Naive thymus-derived CD4-positive, alpha-beta T cell (primary cell): ENCODE measurements at regions of chr2 and their contacts with region 1.

Region 1: DNA sequence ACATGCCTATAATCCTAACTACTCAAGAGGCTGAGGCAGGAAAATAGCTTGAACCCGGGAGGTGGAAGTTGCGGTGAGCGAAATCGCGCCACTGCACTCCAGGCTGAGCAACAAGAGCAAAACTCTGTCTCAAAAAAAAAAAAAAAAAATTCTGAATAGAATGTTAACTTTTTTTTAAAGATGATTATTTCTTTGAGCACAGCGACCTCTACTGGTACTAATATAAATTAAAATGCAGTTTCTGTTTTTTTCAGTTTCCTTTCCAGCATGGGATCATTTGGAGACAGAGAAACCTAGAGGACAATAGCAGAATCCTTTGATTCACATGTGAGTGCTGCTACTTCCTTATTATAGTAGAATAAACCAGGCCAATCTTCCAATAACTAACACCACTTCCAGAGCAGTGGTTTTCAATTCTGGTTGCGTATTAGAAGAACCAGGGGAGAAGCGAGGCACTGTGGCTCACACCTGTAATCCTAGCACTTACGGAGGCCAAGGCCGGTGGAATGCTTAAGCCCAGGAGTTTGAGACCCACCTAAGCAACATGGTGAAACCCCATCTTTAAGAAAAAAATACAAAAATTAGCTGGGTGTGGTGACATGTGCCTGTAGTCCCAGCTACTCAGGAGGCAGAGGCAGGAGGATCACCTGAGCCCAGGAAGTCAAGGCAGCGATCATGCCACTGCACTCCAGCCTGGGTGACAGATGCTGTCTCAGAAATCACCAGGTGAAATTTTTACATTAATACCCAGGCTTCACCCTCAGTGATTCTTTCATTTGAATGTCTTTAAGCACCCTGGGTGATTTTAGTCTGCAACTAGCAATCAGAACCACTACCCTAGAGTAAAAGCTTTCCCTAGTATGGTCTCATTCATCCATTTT is 10.1 kb downstream of the SRSF7 start:
- DNase-seq: peak in 7 of 9 donors; percentile 31 to 59 (median 53)
- ATAC-seq: peak; percentile 56
- H3K4me3 ChIP-seq: no peak overlapping the region
- H3K4me3 Mint-ChIP-seq: no peak overlapping the region
- H3K27ac ChIP-seq: no peak overlapping the region
- H3K27ac Mint-ChIP-seq: peak overlapping the region in 8 of 9 donors; percentile 3 to 83 (median 70)
- H3K4me1 ChIP-seq: peaks cover 10 to 11% of the 10 kb centered on the region in 2 donors
- H3K4me1 Mint-ChIP-seq: peaks cover 20 to 57% (median 36%) of the 10 kb centered on the region in 7 donors
- H3K27me3 ChIP-seq: no peaks in the 10 kb centered on the region
- H3K27me3 Mint-ChIP-seq: no peaks in the 10 kb centered on the region

Region 2: DNA sequence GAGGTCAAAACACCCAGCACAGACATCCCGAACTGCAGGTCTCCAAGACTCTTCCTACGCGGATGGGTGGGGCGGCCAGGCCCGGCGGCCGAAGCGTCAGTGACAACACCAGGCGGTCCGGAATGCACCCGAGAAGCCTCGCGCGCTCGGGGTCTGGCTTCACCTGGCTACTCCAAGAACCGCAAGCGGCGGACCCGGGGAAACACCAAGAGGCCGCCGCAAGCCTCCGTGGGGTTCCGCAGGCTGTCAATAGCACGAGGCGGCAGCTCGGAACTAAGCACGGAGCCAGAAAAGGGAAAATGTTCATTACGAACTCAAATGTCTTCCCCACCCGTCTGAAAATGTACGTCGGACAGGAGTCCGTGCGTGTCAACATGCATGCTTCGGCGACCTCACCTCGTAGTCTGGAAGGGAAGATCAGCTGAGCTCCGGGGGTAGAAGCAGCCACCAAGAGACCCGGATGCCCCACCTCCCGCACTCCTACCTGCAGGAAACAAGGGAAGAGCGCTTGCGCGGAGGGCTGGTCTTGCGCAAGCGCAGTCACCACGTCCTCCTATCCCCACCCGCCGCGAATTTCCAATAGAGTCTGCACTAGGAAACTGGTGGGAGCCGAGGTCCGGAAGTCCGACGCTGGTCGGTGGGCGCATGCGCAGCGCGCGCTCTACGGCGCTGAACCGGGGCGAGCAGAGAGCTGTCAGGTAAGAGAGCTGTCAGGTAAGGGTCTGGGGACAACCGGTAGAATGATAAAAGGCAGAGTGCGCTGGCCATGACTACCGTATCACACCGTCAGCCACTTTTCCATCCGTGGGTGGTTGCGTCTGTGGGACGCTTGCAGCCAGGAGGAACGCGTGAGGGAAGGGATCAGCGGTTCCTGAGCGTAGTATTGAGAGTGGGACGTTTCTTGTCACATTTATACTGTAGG is 1657.0 kb before region 1 on chr2 and contains the starts of genes GPATCH11 and HEATR5B:
- CTCF ChIA-PET with region 1: no interaction called
- POLR2A ChIA-PET with region 1: no interaction called
- intact Hi-C with region 1: loop called in 1 of 2 experiments (anchors 10 kb)
- DNase-seq: peak; percentile 76 to 94 (median 92)
- ATAC-seq: peak; percentile 87
- H3K4me3 ChIP-seq: peak within 1 kb of the TSS; percentile 74
- H3K4me3 Mint-ChIP-seq: peak within 1 kb of the TSS in 1 of 10 donors; percentile 64
- H3K27ac ChIP-seq: peak within 1 kb of the TSS; percentile 85
- H3K27ac Mint-ChIP-seq: no peak within 1 kb of the TSS
- H3K4me1 ChIP-seq: peaks cover 35 to 45% of the 10 kb centered on the region in 2 donors
- H3K4me1 Mint-ChIP-seq: peaks cover 8 to 62% (median 50%) of the 10 kb centered on the region in 7 donors
- H3K27me3 ChIP-seq: no peaks in the 10 kb centered on the region
- H3K27me3 Mint-ChIP-seq: no peaks in the 10 kb centered on the region
- total RNA-seq, gene GPATCH11: 6.0 to 19.0 (median 11.1) TPM
- total RNA-seq, gene HEATR5B: 25.2 to 50.5 (median 39.3) TPM

Region 3: DNA sequence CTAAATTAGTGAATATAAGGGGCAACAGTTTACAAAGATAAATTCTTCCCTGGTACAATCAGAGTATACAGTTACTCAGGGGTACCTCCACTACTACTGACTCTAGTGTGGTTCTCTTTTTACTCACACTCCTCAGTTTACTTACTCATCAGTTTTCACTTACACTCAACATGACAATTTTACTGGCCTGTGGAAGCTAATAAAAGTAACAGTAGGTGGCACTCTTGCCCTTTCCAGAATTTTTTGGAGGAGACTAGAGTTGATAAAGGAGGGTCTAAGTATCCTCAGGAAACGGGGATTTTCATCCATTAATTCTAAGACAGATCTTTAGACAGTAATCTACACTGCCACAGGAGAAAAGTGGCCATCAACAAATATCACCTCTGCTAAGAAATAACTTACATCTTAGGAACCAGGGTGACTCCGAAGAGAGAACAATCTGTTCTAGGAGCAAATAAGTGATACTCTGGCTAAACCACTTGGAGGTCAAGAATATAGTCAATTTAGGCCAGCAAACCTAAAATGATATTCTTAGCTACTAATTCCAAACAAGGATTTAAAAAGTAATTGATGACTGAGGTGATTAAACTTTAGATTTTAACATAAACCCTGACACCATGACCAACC is 425.3 kb before region 1 on chr2:
- CTCF ChIA-PET with region 1: interaction called, 3 read pairs
- POLR2A ChIA-PET with region 1: no interaction called
- intact Hi-C with region 1: loop called in 1 of 2 experiments (anchors 2 kb)
- DNase-seq: peak in 7 of 9 donors; percentile 14 to 50 (median 33)
- ATAC-seq: peak; percentile 66
- H3K4me3 ChIP-seq: no peak overlapping the region
- H3K4me3 Mint-ChIP-seq: no peak overlapping the region
- H3K27ac ChIP-seq: no peak overlapping the region
- H3K27ac Mint-ChIP-seq: no peak overlapping the region
- H3K4me1 ChIP-seq: no peaks in the 10 kb centered on the region
- H3K4me1 Mint-ChIP-seq: peaks cover 0 to 6% (median 0%) of the 10 kb centered on the region in 7 donors
- H3K27me3 ChIP-seq: no peaks in the 10 kb centered on the region
- H3K27me3 Mint-ChIP-seq: no peaks in the 10 kb centered on the region

Region 4: DNA sequence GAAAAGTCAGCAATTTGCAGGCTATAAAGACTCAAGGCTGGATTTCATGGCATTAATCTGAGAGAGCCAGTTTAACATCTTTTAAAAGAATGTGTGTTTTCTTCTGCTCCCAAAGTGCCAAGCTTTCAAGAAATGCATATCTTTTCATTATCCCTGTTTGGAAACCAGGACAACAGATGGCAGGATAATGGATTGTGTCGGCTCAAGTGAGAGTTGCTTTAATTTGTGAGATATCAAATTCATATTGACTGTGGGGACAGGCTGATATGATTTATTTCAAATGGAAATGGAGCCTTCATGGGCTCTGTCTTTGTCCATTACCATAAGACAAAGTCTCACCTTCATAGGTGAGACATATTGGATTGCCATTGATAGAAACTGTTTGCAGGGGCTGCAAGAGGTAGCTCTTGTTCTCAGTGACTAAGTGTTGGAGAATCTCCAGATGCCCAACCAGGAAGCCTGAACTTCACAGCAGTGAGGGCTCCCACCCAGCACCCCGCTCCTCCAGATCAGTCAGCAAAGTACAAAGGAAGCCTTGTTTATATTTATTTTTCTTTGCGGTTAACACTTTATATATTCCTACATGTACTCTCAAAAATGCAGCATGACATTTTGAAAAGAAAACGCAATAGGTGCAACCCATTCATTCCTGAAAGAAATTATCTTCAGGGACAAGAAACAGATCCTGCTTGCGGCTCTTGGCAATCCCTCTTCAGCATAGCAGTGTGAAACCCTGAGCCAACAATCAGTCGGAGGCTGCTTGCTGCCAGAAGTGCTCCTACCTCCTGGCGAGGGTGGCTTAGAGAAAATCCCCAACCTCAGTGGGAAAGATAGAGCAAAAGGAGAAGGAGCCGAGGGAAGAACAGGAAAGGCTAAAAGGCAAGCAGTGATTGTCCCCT is 298.2 kb before region 1 on chr2:
- CTCF ChIA-PET with region 1: no interaction called
- POLR2A ChIA-PET with region 1: no interaction called
- intact Hi-C with region 1: no loop called
- DNase-seq: no peak
- ATAC-seq: no peak
- H3K4me3 ChIP-seq: no peak overlapping the region
- H3K4me3 Mint-ChIP-seq: no peak overlapping the region
- H3K27ac ChIP-seq: no peak overlapping the region
- H3K27ac Mint-ChIP-seq: no peak overlapping the region
- H3K4me1 ChIP-seq: no peaks in the 10 kb centered on the region
- H3K4me1 Mint-ChIP-seq: peaks cover 0 to 9% (median 0%) of the 10 kb centered on the region in 7 donors
- H3K27me3 ChIP-seq: no peaks in the 10 kb centered on the region
- H3K27me3 Mint-ChIP-seq: peaks cover 0 to 29% (median 11%) of the 10 kb centered on the region in 5 donors

Region 5: GRCh38 chr2:38709567-38710194 is 31.4 kb before region 1 on chr2:
- CTCF ChIA-PET with region 1: interaction called, 4 read pairs
- POLR2A ChIA-PET with region 1: no interaction called
- intact Hi-C with region 1: loop called in 1 of 2 experiments (anchors 2 kb)
- DNase-seq: peak in 7 of 9 donors; percentile 64 to 81 (median 77)
- ATAC-seq: peak; percentile 87
- H3K4me3 ChIP-seq: peak overlapping the region; percentile 21
- H3K4me3 Mint-ChIP-seq: peak overlapping the region; percentile 67 to 86 (median 73)
- H3K27ac ChIP-seq: peak overlapping the region; percentile 15
- H3K27ac Mint-ChIP-seq: peak overlapping the region; percentile 81 to 95 (median 91)
- H3K4me1 ChIP-seq: peaks cover 24 to 31% of the 10 kb centered on the region in 2 donors
- H3K4me1 Mint-ChIP-seq: peaks cover 23 to 70% (median 58%) of the 10 kb centered on the region in 7 donors
- H3K27me3 ChIP-seq: no peaks in the 10 kb centered on the region
- H3K27me3 Mint-ChIP-seq: no peaks in the 10 kb centered on the region

Region 6: DNA sequence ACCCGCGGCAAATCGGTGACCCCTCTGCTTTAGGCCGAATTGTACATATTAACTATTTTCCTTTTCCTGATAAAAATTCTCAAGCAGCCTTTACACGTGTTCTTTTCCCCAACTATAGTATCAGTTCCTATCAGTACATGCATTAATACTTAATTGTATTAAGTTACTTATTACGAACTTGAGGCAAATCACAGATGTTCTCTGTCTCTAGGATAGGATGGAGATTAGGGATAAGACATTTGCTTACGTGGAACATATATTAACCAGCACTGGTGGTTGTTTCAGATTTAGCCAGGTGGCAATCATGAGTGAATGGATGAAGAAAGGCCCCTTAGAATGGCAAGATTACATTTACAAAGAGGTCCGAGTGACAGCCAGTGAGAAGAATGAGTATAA is 37.6 kb after region 1 on chr2:
- CTCF ChIA-PET with region 1: no interaction called
- POLR2A ChIA-PET with region 1: no interaction called
- intact Hi-C with region 1: loop called in 1 of 2 experiments (anchors 5 kb)
- DNase-seq: no peak
- ATAC-seq: no peak
- H3K4me3 ChIP-seq: peak overlapping the region; percentile 85
- H3K4me3 Mint-ChIP-seq: peak overlapping the region; percentile 94 to 100 (median 98)
- H3K27ac ChIP-seq: peak overlapping the region; percentile 81
- H3K27ac Mint-ChIP-seq: peak overlapping the region; percentile 92 to 99 (median 97)
- H3K4me1 ChIP-seq: peaks cover 0 to 5% of the 10 kb centered on the region in 2 donors
- H3K4me1 Mint-ChIP-seq: peaks cover 8 to 23% (median 17%) of the 10 kb centered on the region in 7 donors
- H3K27me3 ChIP-seq: no peaks in the 10 kb centered on the region
- H3K27me3 Mint-ChIP-seq: peaks cover 5 to 21% (median 17%) of the 10 kb centered on the region in 5 donors

Region 7: DNA sequence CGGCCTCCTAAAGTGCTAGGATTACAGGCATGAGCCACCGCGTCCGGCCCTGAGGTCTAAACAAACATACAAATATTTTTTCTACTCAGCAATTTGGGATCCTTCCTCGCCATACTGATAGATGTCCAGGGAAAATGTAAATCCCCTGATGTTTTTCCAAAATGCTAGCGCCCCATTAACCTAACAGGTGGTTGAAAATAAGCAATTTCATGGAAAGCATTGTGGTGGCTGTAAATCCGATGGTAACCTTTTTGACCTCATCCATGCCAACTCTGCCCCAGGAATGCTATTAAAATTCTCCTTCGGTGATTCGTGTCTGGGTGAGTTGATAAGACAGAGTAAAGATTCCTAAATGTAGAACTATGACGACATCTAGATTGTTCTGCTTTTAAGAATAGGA is 56.2 kb after region 1 on chr2:
- CTCF ChIA-PET with region 1: no interaction called
- POLR2A ChIA-PET with region 1: no interaction called
- intact Hi-C with region 1: no loop called
- DNase-seq: no peak
- ATAC-seq: no peak
- H3K4me3 ChIP-seq: no peak overlapping the region
- H3K4me3 Mint-ChIP-seq: no peak overlapping the region
- H3K27ac ChIP-seq: no peak overlapping the region
- H3K27ac Mint-ChIP-seq: peak overlapping the region in 1 of 9 donors; percentile 19
- H3K4me1 ChIP-seq: no peaks in the 10 kb centered on the region
- H3K4me1 Mint-ChIP-seq: no peaks in the 10 kb centered on the region
- H3K27me3 ChIP-seq: no peaks in the 10 kb centered on the region
- H3K27me3 Mint-ChIP-seq: no peaks in the 10 kb centered on the region

Region 8: DNA sequence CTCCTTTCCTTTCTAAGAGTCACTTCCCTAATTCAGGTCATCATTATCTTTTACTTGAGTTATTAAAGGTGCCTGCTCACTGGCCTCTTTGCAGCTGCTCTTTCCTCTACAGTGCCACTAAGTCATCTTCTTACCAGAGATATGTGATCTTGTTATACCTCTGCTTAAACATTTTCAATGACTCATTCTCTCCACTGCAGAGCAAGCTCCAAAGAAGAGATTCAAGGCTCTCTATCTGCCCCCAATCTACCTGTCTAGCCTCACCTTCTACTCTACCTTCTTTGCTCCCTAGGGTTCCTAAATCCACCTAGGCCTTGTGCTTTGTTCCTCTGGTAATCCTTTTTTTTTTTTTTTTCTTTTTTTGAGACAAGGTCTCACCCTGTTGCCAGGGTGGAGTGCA is 151.7 kb after region 1 on chr2:
- CTCF ChIA-PET with region 1: no interaction called
- POLR2A ChIA-PET with region 1: no interaction called
- intact Hi-C with region 1: no loop called
- DNase-seq: no peak
- ATAC-seq: no peak
- H3K4me3 ChIP-seq: no peak overlapping the region
- H3K4me3 Mint-ChIP-seq: no peak overlapping the region
- H3K27ac ChIP-seq: no peak overlapping the region
- H3K27ac Mint-ChIP-seq: no peak overlapping the region
- H3K4me1 ChIP-seq: no peaks in the 10 kb centered on the region
- H3K4me1 Mint-ChIP-seq: no peaks in the 10 kb centered on the region
- H3K27me3 ChIP-seq: no peaks in the 10 kb centered on the region
- H3K27me3 Mint-ChIP-seq: peaks cover 3 to 26% (median 10%) of the 10 kb centered on the region in 5 donors